ENCODE measurements at regions of chrX and their contacts with region 1.

Region 1: GRCh38 chrX:11533211-11533651 is 132.5 kb downstream of the ARHGAP6 start:
- DNase-seq: peak; percentile 32
- ATAC-seq: peak; percentile 65
- H3K4me3 ChIP-seq: no peak overlapping the region
- H3K27ac ChIP-seq: no peak overlapping the region
- H3K4me1 ChIP-seq: no peaks in the 10 kb centered on the region
- H3K27me3 ChIP-seq: no peaks in the 10 kb centered on the region
- CTCF ChIP-seq: peak; percentile 71; the same call in 1 of the 2 replicates

Region 2: DNA sequence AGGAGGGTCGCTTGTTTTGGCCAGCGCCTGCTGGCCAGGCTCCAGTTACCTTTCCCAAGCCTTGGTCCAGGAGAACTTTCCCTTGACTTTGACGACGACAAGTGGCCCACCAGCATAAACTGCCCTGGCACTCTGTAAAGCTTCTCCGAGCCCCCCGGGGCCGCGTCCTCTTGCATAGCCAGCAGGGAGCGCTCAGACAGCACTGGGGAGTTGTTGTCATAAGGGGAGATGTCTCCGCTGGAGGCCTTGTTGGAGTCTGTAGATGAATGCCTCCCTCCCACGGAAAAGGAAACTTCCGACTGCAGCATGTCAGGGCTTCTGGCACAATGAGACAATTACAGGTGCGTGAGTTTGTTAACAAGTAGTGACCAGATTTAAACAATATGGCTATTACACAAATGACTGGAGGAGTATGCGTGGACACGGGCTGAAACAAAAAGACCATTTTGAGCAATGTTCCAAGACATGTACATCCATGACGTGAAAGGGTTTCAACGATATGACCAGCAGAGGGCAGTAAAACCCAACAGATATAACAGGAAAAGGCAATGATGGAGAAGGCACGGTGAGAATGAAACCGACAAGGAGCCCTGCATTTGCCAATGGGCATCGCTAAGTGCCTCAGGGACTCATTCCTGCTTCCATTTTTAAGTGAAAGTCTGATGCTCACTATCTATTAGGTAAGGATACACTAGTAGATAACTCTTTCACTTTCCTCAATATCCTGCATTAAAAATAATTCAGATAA is 389.1 kb before region 1 on chrX:
- CTCF ChIA-PET with region 1: no interaction called
- POLR2A ChIA-PET with region 1: no interaction called
- in situ Hi-C with region 1: no loop called
- intact Hi-C with region 1: loop called (anchors 1 kb)
- DNase-seq: peak; percentile 36
- ATAC-seq: peak; percentile 73
- H3K4me3 ChIP-seq: no peak overlapping the region
- H3K27ac ChIP-seq: no peak overlapping the region
- H3K4me1 ChIP-seq: no peaks in the 10 kb centered on the region
- H3K27me3 ChIP-seq: no peaks in the 10 kb centered on the region
- CTCF ChIP-seq: peak; percentile 68

Region 3: GRCh38 chrX:11722304-11722703 is 189.1 kb after region 1 on chrX:
- CTCF ChIA-PET with region 1: no interaction called
- POLR2A ChIA-PET with region 1: no interaction called
- in situ Hi-C with region 1: no loop called
- intact Hi-C with region 1: loop called (anchors 2 kb)
- DNase-seq: no peak
- ATAC-seq: no peak
- H3K4me3 ChIP-seq: no peak overlapping the region
- H3K27ac ChIP-seq: no peak overlapping the region
- H3K4me1 ChIP-seq: no peaks in the 10 kb centered on the region
- H3K27me3 ChIP-seq: no peaks in the 10 kb centered on the region
- CTCF ChIP-seq: no peak

Region 4: DNA sequence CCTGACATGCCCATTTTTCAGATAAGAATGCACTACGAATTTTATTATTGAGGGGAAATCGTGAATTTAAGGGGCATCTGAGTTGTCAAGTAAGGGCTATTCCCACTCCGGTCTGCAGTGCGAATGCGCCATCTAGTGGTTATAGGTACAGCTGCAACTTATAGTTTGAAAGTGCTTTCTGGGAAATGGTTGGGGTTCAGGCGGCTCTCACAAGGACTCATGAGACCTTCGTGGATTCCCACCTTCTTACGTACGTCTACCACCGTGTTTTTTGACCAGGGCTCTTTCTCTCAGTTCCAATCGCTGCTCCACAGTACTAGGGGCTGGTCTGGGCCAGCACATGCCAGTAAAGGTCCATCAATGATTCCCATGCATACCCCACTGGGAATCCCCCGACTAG is 237.1 kb after region 1 on chrX:
- CTCF ChIA-PET with region 1: no interaction called
- POLR2A ChIA-PET with region 1: no interaction called
- in situ Hi-C with region 1: no loop called
- intact Hi-C with region 1: loop called (anchors 2 kb)
- DNase-seq: no peak
- ATAC-seq: peak; percentile 80
- H3K4me3 ChIP-seq: no peak overlapping the region
- H3K27ac ChIP-seq: no peak overlapping the region
- H3K4me1 ChIP-seq: no peaks in the 10 kb centered on the region
- H3K27me3 ChIP-seq: no peaks in the 10 kb centered on the region
- CTCF ChIP-seq: peak; percentile 81

Measured in Panc1 (cell line).